ENCODE measurements at regions of chr7 and their contacts with region 1.

Region 1: DNA sequence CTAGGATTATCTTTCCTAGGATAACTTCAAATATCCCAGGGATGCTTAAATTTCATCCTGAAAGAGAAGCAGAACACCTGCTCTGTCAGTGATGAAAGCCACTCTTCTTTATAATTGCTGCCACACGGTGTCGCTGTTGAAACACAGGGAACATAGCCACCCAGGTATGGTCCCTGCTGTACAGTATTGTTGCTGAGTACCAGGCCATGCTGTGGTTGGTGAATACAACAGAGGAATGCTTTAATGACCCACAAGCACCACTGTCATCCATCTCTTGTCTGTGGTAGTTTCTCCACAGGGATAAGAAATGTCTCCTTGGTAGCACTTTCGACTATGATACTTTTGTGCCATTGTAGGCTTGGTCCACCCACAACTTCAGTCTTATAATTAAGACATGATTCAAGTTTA is 70.6 kb upstream of the STARD3NL start:
- DNase-seq: peak in 3 of 4 donors; percentile 18 to 52 (median 44)
- ATAC-seq: peak; percentile 96
- H3K4me3 ChIP-seq: no peak overlapping the region
- H3K27ac ChIP-seq: no peak overlapping the region
- H3K4me1 ChIP-seq: no peaks in the 10 kb centered on the region
- H3K27me3 ChIP-seq: no peaks in the 10 kb centered on the region
- CTCF ChIP-seq: peak; percentile 61 to 78

Region 2: GRCh38 chr7:37916673-37917660 is 190.5 kb before region 1 on chr7 and contains the start of gene SFRP4:
- intact Hi-C with region 1: loop called in 1 of 2 experiments (anchors 10 kb)
- DNase-seq: peak; percentile 69 to 83 (median 76)
- ATAC-seq: peak; percentile 63
- H3K4me3 ChIP-seq: peak within 1 kb of the TSS; percentile 45 to 46
- H3K27ac ChIP-seq: peak within 1 kb of the TSS in 1 of 2 donors; percentile 34
- H3K4me1 ChIP-seq: peaks cover 6 to 38% of the 10 kb centered on the region in 2 donors
- H3K27me3 ChIP-seq: peaks cover 0 to 68% of the 10 kb centered on the region in 2 donors
- CTCF ChIP-seq: peak; percentile 39 to 47
- polyA plus RNA-seq, gene SFRP4: 0.43 to 1.8 (median 1.3) TPM

Region 3: GRCh38 chr7:37973915-37974314 is 133.6 kb before region 1 on chr7:
- intact Hi-C with region 1: no loop called
- DNase-seq: no peak
- ATAC-seq: no peak
- H3K4me3 ChIP-seq: no peak overlapping the region
- H3K27ac ChIP-seq: no peak overlapping the region
- H3K4me1 ChIP-seq: no peaks in the 10 kb centered on the region
- H3K27me3 ChIP-seq: no peaks in the 10 kb centered on the region
- CTCF ChIP-seq: no peak

Region 4: GRCh38 chr7:38222481-38223096 is 115.1 kb after region 1 on chr7:
- intact Hi-C with region 1: loop called in 1 of 2 experiments (anchors 5 kb)
- DNase-seq: peak in 2 of 4 donors; percentile 41 to 65
- ATAC-seq: peak; percentile 94
- H3K4me3 ChIP-seq: no peak overlapping the region
- H3K27ac ChIP-seq: peak overlapping the region in 1 of 2 donors; percentile 29
- H3K4me1 ChIP-seq: peaks cover 0 to 22% of the 10 kb centered on the region in 2 donors
- H3K27me3 ChIP-seq: no peaks in the 10 kb centered on the region
- CTCF ChIP-seq: peak; percentile 75 to 78

Region 5: GRCh38 chr7:38369816-38370493 is 262.5 kb after region 1 on chr7:
- intact Hi-C with region 1: loop called in 1 of 2 experiments (anchors 10 kb)
- DNase-seq: peak; percentile 18 to 96 (median 84)
- ATAC-seq: peak; percentile 98
- H3K4me3 ChIP-seq: no peak overlapping the region
- H3K27ac ChIP-seq: peak overlapping the region in 1 of 2 donors; percentile 20
- H3K4me1 ChIP-seq: peaks cover 0 to 30% of the 10 kb centered on the region in 2 donors
- H3K27me3 ChIP-seq: no peaks in the 10 kb centered on the region
- CTCF ChIP-seq: peak; percentile 86 to 93

Measured in left lung (tissue), 14 donors.